H1 (cell line): ENCODE measurements at regions of chr4 and their contacts with region 1.

Region 1: GRCh38 chr4:140252742-140253555 is 99.0 kb upstream of the MAML3 start:
- DNase-seq: peak in 1 of 2 experiments; percentile 87
- H3K4me3 ChIP-seq: peak overlapping the region; percentile 34 to 66 (median 38)
- H3K27ac ChIP-seq: no peak overlapping the region
- H3K4me1 ChIP-seq: peaks cover 0 to 10% (median 6%) of the 10 kb centered on the region in 4 experiments; a peak in 6 of 7 replicates
- H3K27me3 ChIP-seq: peaks cover 0 to 7% (median 4%) of the 10 kb centered on the region in 4 experiments; a peak in 3 of 7 replicates
- CTCF ChIP-seq: peak; percentile 79 to 94 (median 93)
- EP300 ChIP-seq: no peak
- POLR2A ChIP-seq: no peak
- RAD21 ChIP-seq: peak; percentile 86 to 91

Region 2: DNA sequence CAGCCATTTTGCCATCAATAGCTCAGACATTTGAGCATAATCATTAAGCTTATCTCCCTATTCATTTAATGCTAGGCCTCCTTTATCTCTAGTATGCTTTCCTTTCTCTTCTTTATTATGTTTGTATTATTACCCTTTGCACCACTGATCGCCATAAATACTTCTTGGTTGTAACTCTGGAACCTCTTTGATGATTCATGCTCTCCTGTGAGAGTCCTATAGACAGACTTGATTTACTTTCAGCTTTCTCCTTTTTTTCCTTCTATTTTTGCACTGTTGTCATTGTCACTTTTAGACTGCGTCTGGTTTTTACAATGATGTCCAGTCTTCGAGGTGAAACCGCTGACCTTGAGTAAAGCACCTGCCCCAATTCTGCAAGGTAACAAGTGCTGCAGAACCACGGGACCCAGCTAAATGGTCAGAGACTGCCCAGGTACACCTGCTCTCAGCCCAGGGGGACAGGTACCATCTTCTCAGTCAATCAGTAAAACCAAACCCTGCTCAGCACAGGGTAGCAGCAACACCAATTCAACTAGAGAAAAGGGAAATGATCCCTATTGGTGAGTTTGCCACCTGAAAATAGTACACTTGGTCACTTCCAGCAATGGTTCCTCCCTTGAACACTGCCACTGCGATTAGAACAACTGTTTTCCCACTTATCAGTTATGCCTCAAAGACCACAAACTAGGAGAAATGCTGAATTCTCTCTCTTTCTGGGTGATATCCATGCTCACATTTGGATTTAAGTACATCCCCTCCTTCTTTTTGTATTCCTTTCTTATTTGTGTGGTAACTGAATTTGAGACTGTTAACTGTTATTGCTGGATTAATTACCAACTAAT is 224.1 kb before region 1 on chr4:
- CTCF ChIA-PET with region 1: no interaction called
- POLR2A ChIA-PET with region 1: no interaction called
- DNase-seq: no peak
- H3K4me3 ChIP-seq: no peak overlapping the region
- H3K27ac ChIP-seq: no peak overlapping the region
- H3K4me1 ChIP-seq: no peaks in the 10 kb centered on the region
- H3K27me3 ChIP-seq: no peaks in the 10 kb centered on the region
- CTCF ChIP-seq: no peak
- EP300 ChIP-seq: no peak
- POLR2A ChIP-seq: no peak
- RAD21 ChIP-seq: no peak

Region 3: GRCh38 chr4:140049024-140049848 is 203.7 kb before region 1 on chr4:
- CTCF ChIA-PET with region 1: interaction called, 42 read pairs
- POLR2A ChIA-PET with region 1: interaction called, 5 read pairs
- DNase-seq: peak in 1 of 2 experiments; percentile 55
- H3K4me3 ChIP-seq: peak overlapping the region; percentile 12 to 45 (median 23); a peak in 7 of 8 replicates
- H3K27ac ChIP-seq: peak overlapping the region; percentile 40; the same call in 1 of the 2 replicates
- H3K4me1 ChIP-seq: peaks cover 11 to 37% (median 12%) of the 10 kb centered on the region in 4 experiments
- H3K27me3 ChIP-seq: no peaks in the 10 kb centered on the region
- CTCF ChIP-seq: peak in 2 of 3 experiments; percentile 15 to 22; a peak in 2 of 4 replicates
- EP300 ChIP-seq: no peak
- POLR2A ChIP-seq: peak in 1 of 2 experiments; percentile 26; a peak in 1 of 3 replicates
- RAD21 ChIP-seq: peak; percentile 30 to 36

Region 4: GRCh38 chr4:140168474-140168873 is 84.5 kb before region 1 on chr4:
- CTCF ChIA-PET with region 1: interaction called, 15 read pairs
- POLR2A ChIA-PET with region 1: no interaction called
- DNase-seq: no peak
- H3K4me3 ChIP-seq: no peak overlapping the region
- H3K27ac ChIP-seq: no peak overlapping the region
- H3K4me1 ChIP-seq: no peaks in the 10 kb centered on the region
- H3K27me3 ChIP-seq: no peaks in the 10 kb centered on the region
- CTCF ChIP-seq: no peak
- EP300 ChIP-seq: no peak
- POLR2A ChIP-seq: no peak
- RAD21 ChIP-seq: no peak

Region 5: GRCh38 chr4:140237606-140237986 is 15.4 kb before region 1 on chr4:
- CTCF ChIA-PET with region 1: interaction called, 16 read pairs
- POLR2A ChIA-PET with region 1: interaction called, 24 read pairs
- DNase-seq: peak; percentile 71 to 72
- H3K4me3 ChIP-seq: peak overlapping the region in 2 of 4 experiments; percentile 27 to 45; a peak in 4 of 8 replicates
- H3K27ac ChIP-seq: peak overlapping the region; percentile 66; the same call in 1 of the 2 replicates
- H3K4me1 ChIP-seq: peaks cover 17 to 25% (median 25%) of the 10 kb centered on the region in 4 experiments
- H3K27me3 ChIP-seq: no peaks in the 10 kb centered on the region; a peak in 2 of 7 replicates
- CTCF ChIP-seq: no peak
- EP300 ChIP-seq: no peak
- POLR2A ChIP-seq: peak in 1 of 2 experiments; percentile 74; a peak in 1 of 3 replicates
- RAD21 ChIP-seq: no peak

Region 6: GRCh38 chr4:140326395-140326993 is 73.5 kb after region 1 on chr4:
- CTCF ChIA-PET with region 1: interaction called, 13 read pairs
- POLR2A ChIA-PET with region 1: no interaction called
- DNase-seq: no peak
- H3K4me3 ChIP-seq: no peak overlapping the region
- H3K27ac ChIP-seq: no peak overlapping the region
- H3K4me1 ChIP-seq: no peaks in the 10 kb centered on the region
- H3K27me3 ChIP-seq: no peaks in the 10 kb centered on the region
- CTCF ChIP-seq: peak; percentile 11 to 63 (median 63)
- EP300 ChIP-seq: no peak
- POLR2A ChIP-seq: no peak
- RAD21 ChIP-seq: peak; percentile 77 to 81